ENCODE measurements at regions of chr10 and their contacts with region 1.

Region 1: GRCh38 chr10:116687633-116688032 is 54.7 kb downstream of the HSPA12A start:
- DNase-seq: no peak
- H3K4me3 ChIP-seq: no peak overlapping the region
- H3K4me3 Mint-ChIP-seq: no peak overlapping the region
- H3K27ac Mint-ChIP-seq: no peak overlapping the region
- H3K4me1 ChIP-seq: no peaks in the 10 kb centered on the region
- H3K4me1 Mint-ChIP-seq: no peaks in the 10 kb centered on the region
- H3K27me3 ChIP-seq: no peaks in the 10 kb centered on the region
- H3K27me3 Mint-ChIP-seq: no peaks in the 10 kb centered on the region
- CTCF ChIP-seq: no peak

Region 2: DNA sequence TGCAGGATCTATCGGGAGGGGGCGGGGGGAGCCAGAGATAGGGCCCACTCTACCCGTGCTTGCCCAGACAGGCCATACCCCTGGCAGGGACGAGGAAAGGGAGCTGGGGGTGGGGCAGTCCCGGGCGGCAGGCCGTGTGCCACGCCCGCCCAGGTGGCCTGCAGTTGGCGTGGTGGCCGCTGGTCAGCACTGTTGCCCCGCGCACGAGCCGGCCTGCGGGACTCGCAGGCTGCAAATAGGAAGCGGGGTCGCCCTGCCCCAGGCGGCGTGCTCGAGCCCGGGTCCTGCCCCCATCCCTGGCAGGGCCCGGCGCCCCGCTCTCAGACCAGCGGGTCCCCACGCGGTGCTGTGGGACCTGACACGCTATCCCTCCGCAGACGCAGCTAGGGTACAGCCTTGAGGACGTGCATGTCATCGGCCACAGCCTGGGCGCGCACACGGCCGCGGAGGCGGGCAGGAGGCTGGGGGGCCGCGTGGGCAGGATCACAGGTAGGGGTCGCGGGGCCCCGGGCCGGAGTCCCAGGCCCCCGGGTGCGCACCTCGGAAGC is 60.2 kb before region 1 on chr10:
- CTCF ChIA-PET with region 1: no interaction called
- POLR2A ChIA-PET with region 1: no interaction called
- intact Hi-C with region 1: loop called (anchors 2 kb)
- DNase-seq: peak; percentile 58 to 81
- H3K4me3 ChIP-seq: peak overlapping the region; percentile 58
- H3K4me3 Mint-ChIP-seq: peak overlapping the region; percentile 29
- H3K27ac Mint-ChIP-seq: no peak overlapping the region
- H3K4me1 ChIP-seq: no peaks in the 10 kb centered on the region
- H3K4me1 Mint-ChIP-seq: no peaks in the 10 kb centered on the region
- H3K27me3 ChIP-seq: no peaks in the 10 kb centered on the region
- H3K27me3 Mint-ChIP-seq: no peaks in the 10 kb centered on the region
- CTCF ChIP-seq: peak; percentile 68 to 80

Region 3: GRCh38 chr10:116742367-116743265 is 55.0 kb after region 1 on chr10 and contains the start of gene HSPA12A:
- CTCF ChIA-PET with region 1: no interaction called
- POLR2A ChIA-PET with region 1: interaction called, 3 read pairs
- intact Hi-C with region 1: loop called (anchors 5 kb)
- DNase-seq: peak; percentile 62 to 87
- H3K4me3 ChIP-seq: peak within 1 kb of the TSS; percentile 62
- H3K4me3 Mint-ChIP-seq: peak within 1 kb of the TSS; percentile 69
- H3K27ac Mint-ChIP-seq: no peak within 1 kb of the TSS
- H3K4me1 ChIP-seq: no peaks in the 10 kb centered on the region
- H3K4me1 Mint-ChIP-seq: no peaks in the 10 kb centered on the region
- H3K27me3 ChIP-seq: no peaks in the 10 kb centered on the region
- H3K27me3 Mint-ChIP-seq: no peaks in the 10 kb centered on the region
- CTCF ChIP-seq: no peak
- total RNA-seq, gene HSPA12A: 22.9 and 27.0 TPM in 2 replicates

Region 4: GRCh38 chr10:116765547-116766162 is 78.0 kb after region 1 on chr10:
- CTCF ChIA-PET with region 1: no interaction called
- POLR2A ChIA-PET with region 1: no interaction called
- intact Hi-C with region 1: loop called (anchors 1 kb)
- DNase-seq: peak in 1 of 2 experiments; percentile 35
- H3K4me3 ChIP-seq: no peak overlapping the region
- H3K4me3 Mint-ChIP-seq: no peak overlapping the region
- H3K27ac Mint-ChIP-seq: no peak overlapping the region
- H3K4me1 ChIP-seq: no peaks in the 10 kb centered on the region
- H3K4me1 Mint-ChIP-seq: no peaks in the 10 kb centered on the region
- H3K27me3 ChIP-seq: no peaks in the 10 kb centered on the region
- H3K27me3 Mint-ChIP-seq: peaks cover 3% of the 10 kb centered on the region
- CTCF ChIP-seq: peak; percentile 26 to 33